Activated CD8-positive, alpha-beta T cell treated with anti-CD3 and anti-CD28 coated beads, Interleukin-2, amount 10 ng/mL, durations not matched to agents 7 days and 5 days (primary cell): ENCODE measurements at regions of chr2 and their contacts with region 1.

Region 1: GRCh38 chr2:38508311-38509039 is 94.3 kb downstream of the HNRNPLL start:
- DNase-seq: peak; percentile 88
- ATAC-seq: peak; percentile 87
- H3K4me3 Mint-ChIP-seq: no peak overlapping the region
- H3K27ac Mint-ChIP-seq: no peak overlapping the region
- H3K4me1 Mint-ChIP-seq: peaks cover 6% of the 10 kb centered on the region
- H3K27me3 Mint-ChIP-seq: peaks cover 12% of the 10 kb centered on the region

Region 2: GRCh38 chr2:38308821-38309220 is 199.7 kb before region 1 on chr2:
- CTCF ChIA-PET with region 1: interaction called, 166 read pairs
- POLR2A ChIA-PET with region 1: no interaction called
- DNase-seq: no peak
- ATAC-seq: no peak
- H3K4me3 Mint-ChIP-seq: no peak overlapping the region
- H3K27ac Mint-ChIP-seq: no peak overlapping the region
- H3K4me1 Mint-ChIP-seq: peaks cover 13% of the 10 kb centered on the region
- H3K27me3 Mint-ChIP-seq: no peaks in the 10 kb centered on the region

Region 3: GRCh38 chr2:38315707-38316333 is 192.7 kb before region 1 on chr2:
- CTCF ChIA-PET with region 1: interaction called, 166 read pairs
- POLR2A ChIA-PET with region 1: no interaction called
- DNase-seq: peak; percentile 34
- ATAC-seq: peak; percentile 60
- H3K4me3 Mint-ChIP-seq: no peak overlapping the region
- H3K27ac Mint-ChIP-seq: no peak overlapping the region
- H3K4me1 Mint-ChIP-seq: no peaks in the 10 kb centered on the region
- H3K27me3 Mint-ChIP-seq: no peaks in the 10 kb centered on the region

Region 4: GRCh38 chr2:38323623-38324022 is 184.9 kb before region 1 on chr2:
- CTCF ChIA-PET with region 1: interaction called, 166 read pairs
- POLR2A ChIA-PET with region 1: no interaction called
- DNase-seq: no peak
- ATAC-seq: no peak
- H3K4me3 Mint-ChIP-seq: no peak overlapping the region
- H3K27ac Mint-ChIP-seq: no peak overlapping the region
- H3K4me1 Mint-ChIP-seq: peaks cover 15% of the 10 kb centered on the region
- H3K27me3 Mint-ChIP-seq: no peaks in the 10 kb centered on the region

Region 5: GRCh38 chr2:38377050-38377828 is 131.2 kb before region 1 on chr2 and contains the start of gene ATL2:
- CTCF ChIA-PET with region 1: interaction called, 34 read pairs
- POLR2A ChIA-PET with region 1: no interaction called
- DNase-seq: peak; percentile 97
- ATAC-seq: peak; percentile 89
- H3K4me3 Mint-ChIP-seq: peak within 1 kb of the TSS; percentile 97
- H3K27ac Mint-ChIP-seq: peak within 1 kb of the TSS; percentile 94
- H3K4me1 Mint-ChIP-seq: peaks cover 47% of the 10 kb centered on the region
- H3K27me3 Mint-ChIP-seq: no peaks in the 10 kb centered on the region
- total RNA-seq, gene ATL2: 50.5 to 58.7 TPM

Region 6: GRCh38 chr2:38474715-38475566 is 33.5 kb before region 1 on chr2:
- CTCF ChIA-PET with region 1: interaction called, 10 read pairs
- POLR2A ChIA-PET with region 1: no interaction called
- DNase-seq: no peak
- ATAC-seq: no peak
- H3K4me3 Mint-ChIP-seq: no peak overlapping the region
- H3K27ac Mint-ChIP-seq: no peak overlapping the region
- H3K4me1 Mint-ChIP-seq: peaks cover 13% of the 10 kb centered on the region
- H3K27me3 Mint-ChIP-seq: peaks cover 11% of the 10 kb centered on the region

Region 7: DNA sequence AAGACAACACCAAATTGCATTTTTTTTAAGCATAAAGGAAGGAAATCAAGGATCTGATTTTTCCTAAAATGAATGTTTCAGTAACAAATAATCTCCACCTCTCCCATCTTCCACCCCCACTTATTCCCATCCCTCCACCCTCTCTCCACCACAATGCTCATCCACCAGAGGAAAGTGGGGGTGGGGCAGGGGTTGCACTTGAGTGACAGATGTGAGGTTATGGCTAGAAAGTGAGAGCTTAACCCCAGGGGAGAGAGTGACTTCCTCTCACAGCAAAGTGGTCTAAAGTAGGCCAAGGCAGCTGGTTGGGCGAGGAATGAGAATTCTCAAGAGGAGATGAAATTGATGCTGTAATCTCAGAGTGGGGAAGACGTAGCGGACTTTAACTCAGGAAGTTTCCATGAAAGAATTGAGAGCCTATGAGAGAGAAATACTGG is 10.4 kb before region 1 on chr2:
- CTCF ChIA-PET with region 1: interaction called, 21 read pairs
- POLR2A ChIA-PET with region 1: no interaction called
- DNase-seq: peak; percentile 23
- ATAC-seq: no peak
- H3K4me3 Mint-ChIP-seq: no peak overlapping the region
- H3K27ac Mint-ChIP-seq: no peak overlapping the region
- H3K4me1 Mint-ChIP-seq: peaks cover 8% of the 10 kb centered on the region
- H3K27me3 Mint-ChIP-seq: peaks cover 6% of the 10 kb centered on the region

Region 8: DNA sequence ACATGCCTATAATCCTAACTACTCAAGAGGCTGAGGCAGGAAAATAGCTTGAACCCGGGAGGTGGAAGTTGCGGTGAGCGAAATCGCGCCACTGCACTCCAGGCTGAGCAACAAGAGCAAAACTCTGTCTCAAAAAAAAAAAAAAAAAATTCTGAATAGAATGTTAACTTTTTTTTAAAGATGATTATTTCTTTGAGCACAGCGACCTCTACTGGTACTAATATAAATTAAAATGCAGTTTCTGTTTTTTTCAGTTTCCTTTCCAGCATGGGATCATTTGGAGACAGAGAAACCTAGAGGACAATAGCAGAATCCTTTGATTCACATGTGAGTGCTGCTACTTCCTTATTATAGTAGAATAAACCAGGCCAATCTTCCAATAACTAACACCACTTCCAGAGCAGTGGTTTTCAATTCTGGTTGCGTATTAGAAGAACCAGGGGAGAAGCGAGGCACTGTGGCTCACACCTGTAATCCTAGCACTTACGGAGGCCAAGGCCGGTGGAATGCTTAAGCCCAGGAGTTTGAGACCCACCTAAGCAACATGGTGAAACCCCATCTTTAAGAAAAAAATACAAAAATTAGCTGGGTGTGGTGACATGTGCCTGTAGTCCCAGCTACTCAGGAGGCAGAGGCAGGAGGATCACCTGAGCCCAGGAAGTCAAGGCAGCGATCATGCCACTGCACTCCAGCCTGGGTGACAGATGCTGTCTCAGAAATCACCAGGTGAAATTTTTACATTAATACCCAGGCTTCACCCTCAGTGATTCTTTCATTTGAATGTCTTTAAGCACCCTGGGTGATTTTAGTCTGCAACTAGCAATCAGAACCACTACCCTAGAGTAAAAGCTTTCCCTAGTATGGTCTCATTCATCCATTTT is 232.6 kb after region 1 on chr2:
- CTCF ChIA-PET with region 1: no interaction called
- POLR2A ChIA-PET with region 1: no interaction called
- DNase-seq: no peak
- ATAC-seq: peak; percentile 25
- H3K4me3 Mint-ChIP-seq: no peak overlapping the region
- H3K27ac Mint-ChIP-seq: no peak overlapping the region
- H3K4me1 Mint-ChIP-seq: peaks cover 31% of the 10 kb centered on the region
- H3K27me3 Mint-ChIP-seq: no peaks in the 10 kb centered on the region